ENCODE measurements at regions of chr7 and their contacts with region 1.

Region 1: DNA sequence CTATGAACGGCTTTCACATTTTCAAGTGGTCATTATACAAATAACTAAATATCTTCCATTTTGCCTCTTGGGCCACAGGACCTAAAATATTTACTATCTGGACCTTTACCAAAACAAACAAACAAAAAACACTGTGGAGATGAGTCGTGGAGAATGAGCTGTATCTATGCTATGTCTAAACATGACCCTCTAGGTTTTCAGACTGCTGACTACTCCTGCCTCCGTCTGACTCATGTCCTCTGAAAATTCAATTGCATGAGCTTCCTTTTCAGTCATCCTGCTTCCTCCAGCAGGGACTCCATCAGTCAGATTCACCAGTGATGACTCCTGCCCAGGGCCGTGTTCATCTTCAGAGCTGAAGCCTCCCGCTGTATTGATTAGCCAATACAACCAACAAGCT is 96.8 kb downstream of the COL28A1 start:
- DNase-seq: peak in 1 of 2 donors; percentile 34
- H3K4me3 ChIP-seq: no peak overlapping the region
- H3K27ac ChIP-seq: peak overlapping the region in 2 of 5 donors; percentile 58 to 60
- H3K4me1 ChIP-seq: peaks cover 0 to 4% (median 0%) of the 10 kb centered on the region in 4 donors
- H3K27me3 ChIP-seq: no peaks in the 10 kb centered on the region
- CTCF ChIP-seq: no peak
- EP300 ChIP-seq: no peak
- POLR2A ChIP-seq: no peak

Region 2: DNA sequence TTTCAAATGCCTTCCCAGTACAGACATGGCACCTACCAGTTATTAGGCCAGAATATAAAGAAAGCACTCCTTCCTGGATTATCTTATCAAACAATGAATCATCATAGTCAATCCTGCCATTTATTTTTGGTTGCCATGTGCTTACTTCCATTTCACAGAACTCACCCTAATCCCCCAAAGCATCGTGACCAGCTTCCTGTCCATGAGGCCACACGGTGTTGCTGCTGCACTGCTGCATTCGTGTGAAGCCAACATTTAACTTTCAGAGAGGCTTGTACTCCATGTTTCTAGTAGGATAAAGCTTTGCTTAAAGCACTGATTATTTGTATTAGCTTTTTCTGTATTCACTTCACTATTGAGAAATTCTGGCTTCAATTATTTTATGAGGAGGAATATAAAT is 82.4 kb after region 1 on chr7:
- intact Hi-C with region 1: loop called (anchors 10 kb)
- DNase-seq: no peak
- H3K4me3 ChIP-seq: no peak overlapping the region
- H3K27ac ChIP-seq: no peak overlapping the region
- H3K4me1 ChIP-seq: no peaks in the 10 kb centered on the region
- H3K27me3 ChIP-seq: no peaks in the 10 kb centered on the region
- CTCF ChIP-seq: no peak
- EP300 ChIP-seq: no peak
- POLR2A ChIP-seq: no peak

Measured in stomach (tissue), 19 donors.